Prostate gland (tissue), 2 donors: ENCODE measurements at regions of chr1 and their contacts with region 1.

Region 1: DNA sequence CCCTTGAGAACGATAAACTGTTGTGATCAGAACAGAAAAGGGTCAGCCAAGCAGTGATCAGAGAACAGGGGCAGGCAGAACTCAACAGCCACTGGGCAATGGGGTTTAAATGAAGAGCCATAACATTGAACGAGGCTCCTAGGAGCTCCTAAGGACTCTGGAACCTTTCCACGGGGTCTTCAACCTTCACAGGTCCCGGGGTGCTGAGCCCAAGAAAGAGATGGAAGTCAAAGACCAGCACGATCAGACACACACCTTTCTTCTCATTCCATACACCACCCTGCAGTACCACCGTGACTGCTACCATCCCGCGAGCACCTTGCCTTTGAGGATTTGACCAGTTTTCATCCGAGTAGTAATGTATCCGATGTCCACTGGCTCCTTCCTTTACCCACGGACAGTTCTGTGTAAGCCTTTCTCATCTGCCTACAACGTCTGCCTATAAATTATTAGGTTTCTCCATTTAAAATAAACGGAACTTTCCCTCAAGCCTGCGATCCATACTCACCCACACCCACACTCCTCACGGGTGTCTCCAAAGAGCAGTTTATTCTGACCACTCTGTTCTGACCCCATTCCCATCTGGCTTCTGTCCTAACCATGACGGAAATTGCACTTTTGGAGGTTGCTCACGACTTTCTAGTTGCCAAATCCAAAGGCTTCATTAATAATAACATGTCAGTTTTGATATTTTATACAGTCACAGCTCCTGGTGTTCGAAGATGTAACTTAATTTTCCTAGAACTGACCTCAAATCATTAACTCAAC is 16.8 kb upstream of the HHAT start:
- DNase-seq: no peak
- H3K4me3 ChIP-seq: peak overlapping the region in 1 of 2 donors; percentile 18
- H3K27ac ChIP-seq: peak overlapping the region in 1 of 2 donors; percentile 23
- H3K4me1 ChIP-seq: no peaks in the 10 kb centered on the region
- H3K27me3 ChIP-seq: no peaks in the 10 kb centered on the region
- CTCF ChIP-seq: no peak
- POLR2A ChIP-seq: no peak

Region 2: GRCh38 chr1:209850342-209850979 is 461.4 kb before region 1 on chr1:
- intact Hi-C with region 1: loop called (anchors 10 kb)
- DNase-seq: peak; percentile 73
- H3K4me3 ChIP-seq: no peak overlapping the region
- H3K27ac ChIP-seq: peak overlapping the region in 1 of 2 donors; percentile 39
- H3K4me1 ChIP-seq: no peaks in the 10 kb centered on the region
- H3K27me3 ChIP-seq: no peaks in the 10 kb centered on the region
- CTCF ChIP-seq: peak in 3 of 4 experiments; percentile 53 to 65 (median 62)
- POLR2A ChIP-seq: no peak

Region 3: GRCh38 chr1:209945377-209945776 is 366.5 kb before region 1 on chr1:
- intact Hi-C with region 1: no loop called
- DNase-seq: no peak
- H3K4me3 ChIP-seq: no peak overlapping the region
- H3K27ac ChIP-seq: no peak overlapping the region
- H3K4me1 ChIP-seq: no peaks in the 10 kb centered on the region
- H3K27me3 ChIP-seq: no peaks in the 10 kb centered on the region
- CTCF ChIP-seq: no peak
- POLR2A ChIP-seq: no peak

Region 4: DNA sequence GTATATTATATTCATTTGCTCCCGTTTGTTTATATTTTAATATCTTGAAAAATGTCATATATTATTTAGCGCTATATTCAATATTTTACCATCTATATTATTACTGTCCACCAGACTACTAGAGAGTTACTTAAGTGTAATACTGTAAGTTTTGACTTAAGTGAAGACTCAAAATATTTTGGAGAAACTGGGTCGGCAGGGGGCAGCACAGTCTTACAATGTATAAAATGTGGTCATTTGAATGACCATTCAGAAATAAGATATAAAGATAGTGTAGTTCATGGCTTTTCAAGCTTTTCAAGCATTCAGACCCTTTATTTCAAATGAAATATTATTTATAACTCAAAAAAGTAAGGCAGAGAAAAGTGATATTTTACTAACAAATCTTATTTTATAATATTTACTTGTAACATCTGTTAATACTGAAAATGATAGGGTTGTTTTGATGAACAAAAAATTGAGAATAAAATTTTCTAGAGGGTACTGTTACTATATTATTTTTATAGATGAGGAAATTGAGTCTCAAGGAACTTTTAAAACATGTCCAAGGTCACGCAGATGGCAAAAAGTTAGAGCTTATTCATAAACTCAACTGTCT is 168.3 kb before region 1 on chr1:
- intact Hi-C with region 1: loop called (anchors 2 kb)
- DNase-seq: peak; percentile 53
- H3K4me3 ChIP-seq: no peak overlapping the region
- H3K27ac ChIP-seq: no peak overlapping the region
- H3K4me1 ChIP-seq: no peaks in the 10 kb centered on the region
- H3K27me3 ChIP-seq: no peaks in the 10 kb centered on the region
- CTCF ChIP-seq: peak in 3 of 4 experiments; percentile 72 to 74 (median 72)
- POLR2A ChIP-seq: no peak

Region 5: DNA sequence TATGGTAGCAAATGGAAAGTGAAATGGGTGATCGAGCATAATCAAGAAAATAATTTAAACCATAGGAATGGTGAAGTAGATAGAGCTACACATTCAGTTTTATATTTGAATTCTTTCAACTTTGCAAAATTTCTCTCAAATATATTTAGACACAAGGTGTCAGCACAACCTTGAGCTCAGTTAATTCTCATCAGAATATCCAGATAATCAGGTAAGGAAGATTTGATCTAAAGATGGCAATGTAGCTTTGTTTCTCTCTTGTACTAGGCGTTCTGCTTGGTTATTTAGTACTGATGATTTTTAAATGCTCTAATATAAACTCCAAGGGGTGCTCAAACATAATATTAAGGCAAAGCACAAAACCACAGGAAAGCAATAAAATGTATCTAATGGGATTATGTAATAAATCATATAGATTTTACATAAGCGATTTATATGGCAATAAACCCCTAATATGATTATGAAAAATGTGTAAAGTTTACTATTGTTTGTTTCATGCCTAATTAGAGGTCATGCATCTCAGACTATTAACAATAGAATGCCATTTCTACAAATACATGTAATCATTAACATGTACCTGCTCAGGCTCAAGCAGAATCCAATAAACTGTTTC is 111.7 kb before region 1 on chr1:
- intact Hi-C with region 1: loop called (anchors 5 kb)
- DNase-seq: no peak
- H3K4me3 ChIP-seq: no peak overlapping the region
- H3K27ac ChIP-seq: no peak overlapping the region
- H3K4me1 ChIP-seq: no peaks in the 10 kb centered on the region
- H3K27me3 ChIP-seq: no peaks in the 10 kb centered on the region
- CTCF ChIP-seq: peak in 2 of 4 experiments; percentile 35 to 55
- POLR2A ChIP-seq: no peak